ENCODE measurements at regions of chr2 and their contacts with region 1.

Region 1: DNA sequence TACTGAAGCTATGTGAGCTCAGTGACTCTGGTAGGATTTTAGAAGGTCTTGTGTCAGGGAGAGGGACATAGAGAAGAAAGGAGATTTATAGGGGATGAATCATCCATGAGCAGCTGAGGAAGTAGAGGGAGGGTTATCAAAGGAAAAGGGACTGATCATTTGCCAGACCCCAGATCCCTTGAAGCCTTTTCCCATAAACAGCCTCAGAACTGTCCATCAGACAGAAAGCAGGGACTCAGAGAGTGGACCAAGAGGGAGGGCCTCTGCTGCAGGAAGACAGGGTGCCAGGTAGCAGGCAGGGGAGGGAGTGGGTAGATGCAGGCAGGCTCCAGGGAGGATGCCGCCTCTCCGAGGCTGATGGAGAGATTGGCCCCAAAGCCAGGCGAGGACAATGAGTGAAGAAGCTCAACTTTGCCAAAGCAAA is 133.9 kb downstream of the TNS1 start:
- DNase-seq: no peak
- ATAC-seq: no peak
- H3K4me3 Mint-ChIP-seq: no peak overlapping the region
- H3K27ac Mint-ChIP-seq: no peak overlapping the region
- H3K4me1 Mint-ChIP-seq: peaks cover 23% of the 10 kb centered on the region
- H3K27me3 Mint-ChIP-seq: no peaks in the 10 kb centered on the region
- CTCF ChIP-seq: no peak

Region 2: GRCh38 chr2:217880287-217880889 is 11.5 kb after region 1 on chr2:
- CTCF ChIA-PET with region 1: interaction called, 11 read pairs
- POLR2A ChIA-PET with region 1: no interaction called
- DNase-seq: no peak
- ATAC-seq: no peak; the same call in 1 of the 2 replicates
- H3K4me3 Mint-ChIP-seq: no peak overlapping the region
- H3K27ac Mint-ChIP-seq: no peak overlapping the region; the same call in 1 of the 2 replicates
- H3K4me1 Mint-ChIP-seq: peaks cover 13% of the 10 kb centered on the region
- H3K27me3 Mint-ChIP-seq: no peaks in the 10 kb centered on the region
- CTCF ChIP-seq: no peak

Region 3: DNA sequence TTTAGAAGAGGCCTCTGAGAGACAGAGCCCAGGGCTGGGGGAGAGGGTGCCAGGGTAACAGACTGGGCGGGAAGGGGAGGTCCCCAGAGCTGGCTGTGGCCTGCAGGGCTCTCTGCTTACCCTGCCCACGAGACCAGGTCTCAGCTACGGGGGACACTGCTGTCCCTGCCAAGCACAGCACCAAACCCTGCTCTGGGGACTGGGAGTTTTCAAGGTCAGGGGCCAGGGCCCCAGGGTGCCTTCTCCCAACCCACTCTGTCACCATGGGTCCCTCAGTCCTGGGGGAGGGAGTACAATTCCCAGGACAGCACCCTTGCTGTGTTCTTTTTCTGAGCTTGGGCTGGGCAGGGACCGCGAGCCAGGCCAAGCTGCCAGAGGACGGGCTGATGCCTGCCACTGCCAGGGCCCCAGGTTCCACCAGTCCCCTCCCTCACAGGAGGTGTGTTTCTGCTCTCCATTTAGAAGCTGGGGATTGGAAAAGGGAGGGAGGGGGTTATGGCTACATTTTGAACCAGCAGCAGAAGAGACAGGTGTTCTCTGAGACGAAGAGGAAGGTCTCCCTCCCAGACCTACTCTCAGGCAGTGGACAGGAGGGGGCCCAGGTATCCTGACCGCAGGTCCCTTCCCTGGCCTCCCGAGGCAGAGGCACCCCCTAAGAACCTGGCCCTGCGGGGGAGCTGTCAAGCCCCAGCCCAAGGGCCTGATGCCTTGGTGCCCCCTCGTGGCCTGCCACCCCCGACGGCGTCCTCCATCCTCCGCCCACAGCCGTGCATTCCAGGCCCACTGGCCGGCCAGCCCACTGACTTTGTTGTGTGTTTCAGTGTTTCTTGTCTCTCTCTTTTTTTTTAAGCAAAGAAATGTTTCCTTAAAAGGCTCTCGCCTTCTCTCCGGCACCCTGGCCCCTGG is 53.4 kb after region 1 on chr2:
- CTCF ChIA-PET with region 1: no interaction called
- POLR2A ChIA-PET with region 1: no interaction called
- DNase-seq: no peak
- ATAC-seq: no peak
- H3K4me3 Mint-ChIP-seq: no peak overlapping the region
- H3K27ac Mint-ChIP-seq: no peak overlapping the region
- H3K4me1 Mint-ChIP-seq: peaks cover 46% of the 10 kb centered on the region
- H3K27me3 Mint-ChIP-seq: no peaks in the 10 kb centered on the region
- CTCF ChIP-seq: no peak

Measured in WTC11 (cell line).